Naive thymus-derived CD8-positive, alpha-beta T cell (primary cell): ENCODE measurements at regions of chr7 and their contacts with region 1.

Region 1: GRCh38 chr7:100469227-100470044 is 5.4 kb upstream of the SPACDR start:
- DNase-seq: peak; percentile 64 to 88 (median 80)
- ATAC-seq: peak; percentile 90 to 93
- H3K4me3 Mint-ChIP-seq: peak overlapping the region in 1 of 10 donors; percentile 15
- H3K27ac Mint-ChIP-seq: peak overlapping the region in 9 of 10 donors; percentile 25 to 91 (median 67)
- H3K4me1 Mint-ChIP-seq: peaks cover 15 to 46% (median 36%) of the 10 kb centered on the region in 4 donors
- H3K27me3 Mint-ChIP-seq: no peaks in the 10 kb centered on the region

Region 2: GRCh38 chr7:100545360-100546128 is 76.1 kb after region 1 on chr7:
- POLR2A ChIA-PET with region 1: interaction called, 10 read pairs
- DNase-seq: peak in 3 of 10 donors; percentile 18 to 24 (median 20)
- ATAC-seq: peak; percentile 67 to 71
- H3K4me3 Mint-ChIP-seq: peak overlapping the region; percentile 36 to 88 (median 75)
- H3K27ac Mint-ChIP-seq: peak overlapping the region; percentile 81 to 96 (median 92)
- H3K4me1 Mint-ChIP-seq: peaks cover 52 to 99% (median 93%) of the 10 kb centered on the region in 4 donors
- H3K27me3 Mint-ChIP-seq: no peaks in the 10 kb centered on the region

Region 3: DNA sequence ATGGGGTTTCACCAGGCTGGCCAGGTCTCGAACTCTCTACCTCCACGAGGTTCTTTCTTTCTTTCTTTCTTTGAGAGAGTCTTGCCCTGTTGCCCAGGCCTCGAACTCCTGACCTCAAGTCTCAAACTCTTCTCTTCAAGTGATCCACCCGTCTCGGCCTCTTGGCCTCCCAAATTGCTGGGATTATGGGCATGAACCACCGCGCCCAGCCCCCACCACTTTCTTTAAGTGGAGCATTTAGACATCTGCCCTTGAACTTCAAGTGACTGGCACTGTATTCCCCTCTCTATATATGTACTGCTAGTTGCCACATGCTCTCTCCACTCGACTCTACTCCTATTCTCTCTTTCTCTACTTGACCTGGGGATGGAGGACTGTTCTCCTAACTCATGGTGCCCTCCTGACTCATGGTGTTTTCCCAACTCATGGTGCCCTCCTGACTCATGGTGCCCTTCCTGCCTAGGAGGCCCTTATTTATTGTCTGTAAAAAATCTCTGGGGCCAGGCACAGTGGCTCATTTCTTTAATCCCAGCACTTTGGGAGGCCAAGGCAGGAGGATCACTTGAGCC is 445.5 kb after region 1 on chr7:
- POLR2A ChIA-PET with region 1: no interaction called
- DNase-seq: no peak
- ATAC-seq: no peak
- H3K4me3 Mint-ChIP-seq: no peak overlapping the region
- H3K27ac Mint-ChIP-seq: no peak overlapping the region
- H3K4me1 Mint-ChIP-seq: peaks cover 0 to 4% (median 0%) of the 10 kb centered on the region in 4 donors
- H3K27me3 Mint-ChIP-seq: peaks cover 4 to 30% (median 17%) of the 10 kb centered on the region in 5 donors